ENCODE measurements at regions of chr12 and their contacts with region 1.

Region 1: DNA sequence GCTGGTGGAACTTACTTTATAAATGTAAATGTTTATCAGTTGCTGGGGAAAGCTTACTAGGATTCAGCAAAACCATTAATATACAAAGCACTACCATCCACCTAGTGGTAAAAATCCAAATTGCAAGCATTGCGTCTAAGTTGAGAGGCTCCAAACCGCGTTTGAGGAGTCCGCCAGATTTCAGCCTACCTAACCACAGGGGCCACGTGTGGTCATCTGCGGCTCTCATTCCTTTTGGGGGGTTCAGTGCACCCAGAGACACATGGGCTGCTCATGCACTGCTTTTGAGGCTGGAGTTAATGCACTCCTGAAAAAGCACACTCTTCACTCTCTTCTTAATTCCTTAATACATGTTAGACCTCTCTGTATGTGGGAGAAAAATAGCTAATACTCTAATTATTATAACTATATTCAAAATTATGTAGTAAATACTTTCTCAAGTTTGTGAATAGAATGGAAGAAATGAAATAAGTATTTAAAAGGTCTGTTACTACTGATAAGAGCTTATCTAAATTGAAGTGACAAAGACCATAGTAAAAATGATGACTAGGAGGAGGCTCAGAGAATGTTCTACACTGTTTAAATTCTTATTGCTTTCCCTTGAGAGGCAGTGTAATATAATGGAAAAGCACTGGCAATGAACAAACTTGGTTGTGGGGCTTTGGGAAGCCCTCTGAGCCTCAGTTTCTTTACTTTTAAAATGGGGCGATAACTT is 41.4 kb upstream of the MANSC4 start:
- DNase-seq: peak in 9 of 14 experiments; percentile 5 to 78 (median 13)
- ATAC-seq: no peak
- H3K4me3 ChIP-seq: peak overlapping the region; percentile 40
- H3K4me3 Mint-ChIP-seq: peak overlapping the region; percentile 77
- H3K27ac ChIP-seq: peak overlapping the region in 1 of 2 donors; percentile 47
- H3K27ac Mint-ChIP-seq: peak overlapping the region; percentile 64
- H3K4me1 ChIP-seq: peaks cover 13% of the 10 kb centered on the region
- H3K4me1 Mint-ChIP-seq: peaks cover 31% of the 10 kb centered on the region
- H3K27me3 ChIP-seq: no peaks in the 10 kb centered on the region
- H3K27me3 Mint-ChIP-seq: no peaks in the 10 kb centered on the region
- CTCF ChIP-seq: peak; percentile 74

Region 2: GRCh38 chr12:27733052-27733656 is 88.3 kb before region 1 on chr12:
- CTCF ChIA-PET with region 1: interaction called, 12 read pairs
- POLR2A ChIA-PET with region 1: no interaction called
- intact Hi-C with region 1: loop called (anchors 1 to 2 kb)
- DNase-seq: peak in 12 of 14 experiments; percentile 12 to 65 (median 30)
- ATAC-seq: peak; percentile 78
- H3K4me3 ChIP-seq: no peak overlapping the region
- H3K4me3 Mint-ChIP-seq: no peak overlapping the region
- H3K27ac ChIP-seq: no peak overlapping the region
- H3K27ac Mint-ChIP-seq: no peak overlapping the region
- H3K4me1 ChIP-seq: no peaks in the 10 kb centered on the region
- H3K4me1 Mint-ChIP-seq: no peaks in the 10 kb centered on the region
- H3K27me3 ChIP-seq: no peaks in the 10 kb centered on the region
- H3K27me3 Mint-ChIP-seq: no peaks in the 10 kb centered on the region
- CTCF ChIP-seq: peak; percentile 87

Region 3: DNA sequence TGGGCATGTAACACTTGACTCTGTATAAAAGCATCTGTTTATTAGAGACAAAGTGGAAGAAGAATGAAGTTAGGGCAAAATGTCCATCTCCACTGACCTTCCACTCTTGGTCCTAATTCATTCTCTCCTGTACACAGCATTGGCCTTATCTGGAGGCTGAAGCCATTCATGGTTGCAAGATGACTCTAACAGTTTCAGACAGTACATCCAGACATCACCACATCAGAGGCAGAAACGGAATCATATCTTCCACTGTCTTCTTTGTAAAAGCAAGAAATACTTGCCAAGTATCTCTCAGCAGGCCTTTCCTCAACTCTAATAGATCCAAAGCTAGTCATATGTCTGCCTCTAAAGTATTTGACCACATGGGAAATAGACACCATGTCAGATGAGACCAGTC is 110.0 kb after region 1 on chr12:
- CTCF ChIA-PET with region 1: interaction called, 3 read pairs
- POLR2A ChIA-PET with region 1: no interaction called
- intact Hi-C with region 1: loop called in 1 of 2 experiments (anchors 5 kb)
- DNase-seq: no peak
- ATAC-seq: no peak
- H3K4me3 ChIP-seq: no peak overlapping the region
- H3K4me3 Mint-ChIP-seq: no peak overlapping the region
- H3K27ac ChIP-seq: no peak overlapping the region
- H3K27ac Mint-ChIP-seq: no peak overlapping the region
- H3K4me1 ChIP-seq: no peaks in the 10 kb centered on the region
- H3K4me1 Mint-ChIP-seq: no peaks in the 10 kb centered on the region
- H3K27me3 ChIP-seq: peaks cover 3 to 5% of the 10 kb centered on the region in 2 experiments
- H3K27me3 Mint-ChIP-seq: peaks cover 16% of the 10 kb centered on the region
- CTCF ChIP-seq: no peak

Region 4: GRCh38 chr12:27940756-27941402 is 119.5 kb after region 1 on chr12:
- CTCF ChIA-PET with region 1: interaction called, 6 read pairs
- POLR2A ChIA-PET with region 1: interaction called, 5 read pairs
- intact Hi-C with region 1: loop called in 1 of 2 experiments (anchors 5 kb)
- DNase-seq: peak; percentile 45 to 77 (median 66)
- ATAC-seq: peak; percentile 65
- H3K4me3 ChIP-seq: no peak overlapping the region
- H3K4me3 Mint-ChIP-seq: no peak overlapping the region
- H3K27ac ChIP-seq: no peak overlapping the region
- H3K27ac Mint-ChIP-seq: no peak overlapping the region
- H3K4me1 ChIP-seq: no peaks in the 10 kb centered on the region
- H3K4me1 Mint-ChIP-seq: no peaks in the 10 kb centered on the region
- H3K27me3 ChIP-seq: peaks cover 0 to 3% of the 10 kb centered on the region in 2 experiments
- H3K27me3 Mint-ChIP-seq: peaks cover 21% of the 10 kb centered on the region
- CTCF ChIP-seq: peak; percentile 79

Measured in CD4-positive, alpha-beta T cell (primary cell).